ENCODE measurements at regions of chr19 and their contacts with region 1.

Region 1: GRCh38 chr19:17266975-17267788 is at the start of gene BABAM1:
- DNase-seq: peak; percentile 97
- ATAC-seq: peak; percentile 98 to 99
- H3K4me3 ChIP-seq: peak within 1 kb of the TSS; percentile 83 to 92 (median 89)
- H3K27ac ChIP-seq: peak within 1 kb of the TSS; percentile 77 to 91 (median 86)
- H3K4me1 ChIP-seq: peaks cover 8 to 10% of the 10 kb centered on the region in 2 donors
- H3K27me3 ChIP-seq: no peaks in the 10 kb centered on the region
- CTCF ChIP-seq: no peak
- POLR2A ChIP-seq: peak; percentile 17 to 61
- total RNA-seq, gene BABAM1: 86.3 to 120 (median 99.4) TPM

Region 2: DNA sequence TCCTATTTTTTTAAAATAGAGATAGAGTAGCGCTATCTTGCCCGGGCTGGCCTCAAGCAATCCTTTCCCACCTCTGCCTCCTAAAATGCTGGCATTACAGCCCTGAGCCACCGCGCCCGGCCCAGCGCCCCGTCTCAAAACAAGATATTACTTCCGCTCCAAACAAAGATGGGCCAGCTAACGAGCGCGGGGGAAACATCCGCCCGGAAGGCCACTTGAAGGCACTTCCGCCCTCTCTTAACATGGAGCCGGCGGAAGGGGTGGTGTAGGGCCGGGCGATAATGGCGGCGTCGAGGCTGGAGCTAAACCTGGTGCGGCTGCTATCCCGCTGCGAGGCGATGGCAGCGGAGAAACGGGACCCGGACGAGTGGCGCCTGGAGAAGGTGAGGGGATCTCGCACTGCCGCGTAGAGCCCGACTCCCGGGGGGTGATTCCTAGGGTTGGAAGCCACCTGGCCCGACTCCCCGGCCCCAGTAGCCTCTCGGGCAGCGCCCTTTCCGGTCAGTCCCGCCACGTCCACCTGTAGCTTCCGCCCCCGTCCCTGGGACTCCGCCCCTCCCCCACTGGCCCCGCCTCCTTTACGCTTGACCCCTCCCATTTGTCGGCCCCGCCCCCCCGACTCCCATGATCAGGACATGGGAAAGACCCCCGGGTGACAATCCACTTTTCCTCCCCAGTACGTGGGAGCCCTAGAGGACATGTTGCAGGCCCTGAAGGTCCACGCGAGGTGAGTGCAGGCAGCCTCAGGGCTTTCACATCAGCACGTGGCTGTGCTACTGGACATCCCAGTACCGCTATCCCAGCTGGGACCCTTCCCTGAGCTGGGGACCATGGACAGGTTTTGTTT is 51.8 kb before region 1 on chr19 and contains the start of gene USE1:
- in situ Hi-C with region 1: no loop called
- intact Hi-C with region 1: loop called (anchors 1 kb)
- DNase-seq: peak; percentile 86 to 89
- ATAC-seq: peak; percentile 98 to 99
- H3K4me3 ChIP-seq: peak within 1 kb of the TSS; percentile 81 to 88 (median 84)
- H3K27ac ChIP-seq: peak within 1 kb of the TSS; percentile 85 to 91 (median 89)
- H3K4me1 ChIP-seq: peaks cover 9 to 14% of the 10 kb centered on the region in 2 donors
- H3K27me3 ChIP-seq: no peaks in the 10 kb centered on the region
- CTCF ChIP-seq: no peak
- POLR2A ChIP-seq: peak in 1 of 2 donors; percentile 31
- total RNA-seq, gene USE1: 14.1 to 39.9 (median 22.3) TPM

Region 3: DNA sequence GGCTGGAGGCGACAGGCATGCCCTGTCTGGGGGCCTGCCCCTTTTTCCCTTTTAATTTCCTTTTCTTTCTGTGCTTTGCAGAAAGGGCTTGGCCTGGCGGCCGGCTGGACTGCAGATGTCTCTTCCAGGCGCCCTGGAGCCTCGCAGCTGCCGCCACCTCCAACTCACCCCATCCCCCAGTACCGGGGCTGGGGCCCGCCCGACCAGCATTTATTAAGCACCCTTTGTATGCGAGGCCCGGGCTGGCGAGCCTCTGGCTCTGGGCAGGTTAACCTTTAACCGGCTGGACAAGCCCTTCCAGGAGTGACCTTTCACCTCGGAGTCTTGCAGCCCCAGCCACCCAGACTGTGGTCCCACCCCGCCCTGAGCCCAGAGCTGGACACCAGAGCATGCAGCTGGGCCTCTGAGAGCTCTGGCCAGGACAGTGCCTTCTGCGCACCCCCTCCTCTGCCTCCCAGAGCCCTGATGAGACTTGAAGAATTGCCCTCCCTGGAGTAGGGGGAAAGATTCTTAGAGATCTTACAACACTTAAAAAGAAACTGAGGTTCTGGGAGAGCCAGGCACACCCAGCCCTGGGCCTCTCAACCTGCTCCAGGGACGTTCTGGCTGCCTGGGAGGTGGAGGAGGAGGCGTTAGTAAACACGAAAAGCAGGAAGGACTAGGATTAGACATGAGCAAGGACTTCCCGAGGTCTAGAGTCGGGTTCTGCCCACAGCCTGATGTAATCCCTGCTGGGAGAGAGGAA is 20.3 kb before region 1 on chr19:
- in situ Hi-C with region 1: no loop called
- intact Hi-C with region 1: loop called (anchors 1 kb)
- DNase-seq: no peak
- ATAC-seq: peak in 1 of 2 donors; percentile 1
- H3K4me3 ChIP-seq: peak overlapping the region; percentile 54 to 78 (median 69)
- H3K27ac ChIP-seq: peak overlapping the region; percentile 75 to 93 (median 87)
- H3K4me1 ChIP-seq: peaks cover 21 to 26% of the 10 kb centered on the region in 2 donors
- H3K27me3 ChIP-seq: no peaks in the 10 kb centered on the region
- CTCF ChIP-seq: no peak
- POLR2A ChIP-seq: no peak

Region 4: GRCh38 chr19:18831524-18832305 is 1564.5 kb after region 1 on chr19 and contains the start of gene UPF1:
- in situ Hi-C with region 1: no loop called
- intact Hi-C with region 1: no loop called
- DNase-seq: peak; percentile 86 to 87
- ATAC-seq: peak; percentile 91 to 95
- H3K4me3 ChIP-seq: peak within 1 kb of the TSS; percentile 78 to 96 (median 83)
- H3K27ac ChIP-seq: peak within 1 kb of the TSS; percentile 77 to 94 (median 86)
- H3K4me1 ChIP-seq: peaks cover 28 to 38% of the 10 kb centered on the region in 2 donors
- H3K27me3 ChIP-seq: peaks cover 0 to 6% (median 0%) of the 10 kb centered on the region in 3 donors
- CTCF ChIP-seq: peak in 3 of 5 experiments; percentile 20 to 49 (median 23)
- POLR2A ChIP-seq: peak; percentile 78 to 90
- total RNA-seq, gene UPF1: 26.0 to 64.9 (median 46.4) TPM

Measured in gastrocnemius medialis (tissue), 4 donors.